Spleen (tissue), 13 donors: ENCODE measurements at regions of chr2 and their contacts with region 1.

Region 1: GRCh38 chr2:27890146-27890923 is at the starts of genes BABAM2 and RBKS:
- DNase-seq: peak; percentile 97
- H3K4me3 ChIP-seq: peak within 1 kb of the TSS; percentile 66 to 91 (median 76)
- H3K27ac ChIP-seq: peak within 1 kb of the TSS; percentile 97 to 99 (median 98)
- H3K4me1 ChIP-seq: peaks cover 6 to 59% (median 48%) of the 10 kb centered on the region in 6 donors
- H3K27me3 ChIP-seq: no peaks in the 10 kb centered on the region
- CTCF ChIP-seq: peak in 1 of 11 experiments; percentile 22
- POLR2A ChIP-seq: peak; percentile 52 to 73 (median 67)
- total RNA-seq, gene BABAM2: 42.1 to 70.1 (median 63.5) TPM
- total RNA-seq, gene RBKS: 2.0 to 5.1 (median 3.1) TPM

Region 2: GRCh38 chr2:27771548-27772335 is 118.6 kb before region 1 on chr2 and contains the start of gene MRPL33:
- intact Hi-C with region 1: loop called (anchors 10 kb)
- DNase-seq: peak; percentile 96
- H3K4me3 ChIP-seq: peak within 1 kb of the TSS; percentile 74 to 87 (median 82)
- H3K27ac ChIP-seq: peak within 1 kb of the TSS; percentile 91 to 95 (median 94)
- H3K4me1 ChIP-seq: peaks cover 18 to 54% (median 42%) of the 10 kb centered on the region in 6 donors
- H3K27me3 ChIP-seq: no peaks in the 10 kb centered on the region
- CTCF ChIP-seq: no peak
- POLR2A ChIP-seq: no peak
- total RNA-seq, gene MRPL33: 48.3 to 94.6 (median 69.2) TPM